GM12878 (cell line): ENCODE measurements at regions of chr11 and their contacts with region 1.

Region 1: GRCh38 chr11:33362051-33362910 is 105.1 kb downstream of the HIPK3 start:
- DNase-seq: no peak
- ATAC-seq: peak; percentile 84
- H3K4me3 ChIP-seq: no peak overlapping the region
- H3K27ac ChIP-seq: no peak overlapping the region
- H3K4me1 ChIP-seq: no peaks in the 10 kb centered on the region
- H3K27me3 ChIP-seq: no peaks in the 10 kb centered on the region
- CTCF ChIP-seq: peak; percentile 39 to 63 (median 47); a peak in 4 of 6 replicates
- EP300 ChIP-seq: no peak
- POLR2A ChIP-seq: no peak
- RAD21 ChIP-seq: peak; percentile 76

Region 2: DNA sequence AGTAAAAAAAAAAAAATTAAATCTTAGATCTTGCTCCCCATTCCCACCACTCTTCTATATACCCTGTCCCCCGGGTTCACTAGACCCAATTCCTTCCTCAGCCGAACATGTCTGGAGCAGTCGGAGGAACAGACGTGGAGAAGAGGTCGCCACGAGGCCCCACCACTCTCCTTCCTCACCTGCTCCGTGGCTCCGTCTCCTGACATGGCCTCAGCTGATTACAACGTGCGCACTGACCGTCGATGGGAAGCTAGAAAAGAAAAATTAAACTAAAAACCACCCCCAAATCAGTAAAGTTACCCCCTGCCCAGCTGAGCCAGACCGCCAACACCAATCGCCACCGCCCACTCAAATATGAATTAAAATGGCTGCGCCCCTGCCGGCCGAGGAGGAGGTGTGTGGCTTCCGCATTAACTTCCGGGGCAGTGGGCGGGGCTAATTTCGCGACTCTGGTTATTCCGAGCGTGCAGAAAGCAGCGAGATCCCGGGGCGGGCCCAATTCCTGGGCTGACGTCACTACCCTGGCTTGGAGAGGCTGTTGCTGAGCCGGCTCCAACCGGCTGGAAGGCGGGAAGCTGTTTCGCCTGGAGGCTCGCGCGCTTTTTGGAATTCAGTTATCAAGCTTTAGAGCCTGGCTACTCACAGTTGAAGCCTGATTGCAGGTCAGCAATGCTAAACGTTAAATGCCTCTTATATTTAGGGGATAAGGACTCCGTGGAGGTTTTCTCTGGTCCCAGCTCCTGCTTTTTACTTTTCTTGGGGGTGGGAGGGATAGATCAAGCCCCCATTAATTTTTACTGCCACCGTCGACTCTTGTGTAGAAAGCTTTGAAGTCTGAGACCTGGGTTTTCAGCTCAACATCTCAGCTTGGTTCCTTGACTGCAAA is 200.9 kb before region 1 on chr11 and contains the start of gene CSTF3:
- CTCF ChIA-PET with region 1: interaction called, 12 read pairs
- POLR2A ChIA-PET with region 1: no interaction called
- RAD21 ChIA-PET with region 1: interaction called, 4 read pairs
- SMC1A ChIA-PET with region 1: interaction called, 5 read pairs
- in situ Hi-C with region 1: no loop called
- intact Hi-C with region 1: no loop called
- DNase-seq: peak; percentile 74
- ATAC-seq: peak; percentile 92
- H3K4me3 ChIP-seq: peak within 1 kb of the TSS; percentile 91
- H3K27ac ChIP-seq: peak within 1 kb of the TSS; percentile 97
- H3K4me1 ChIP-seq: no peaks in the 10 kb centered on the region
- H3K27me3 ChIP-seq: no peaks in the 10 kb centered on the region
- CTCF ChIP-seq: peak; percentile 19 to 23 (median 19); a peak in 3 of 6 replicates
- EP300 ChIP-seq: no peak; a peak in 1 of 4 replicates
- POLR2A ChIP-seq: peak; percentile 80
- RAD21 ChIP-seq: no peak
- polyA plus RNA-seq, gene CSTF3: 42.0 to 50.1 TPM

Region 3: GRCh38 chr11:33475993-33476392 is 113.7 kb after region 1 on chr11:
- CTCF ChIA-PET with region 1: no interaction called
- POLR2A ChIA-PET with region 1: no interaction called
- RAD21 ChIA-PET with region 1: no interaction called
- SMC1A ChIA-PET with region 1: interaction called, 5 read pairs
- in situ Hi-C with region 1: no loop called
- intact Hi-C with region 1: loop called (anchors 10 kb)
- DNase-seq: no peak
- ATAC-seq: no peak
- H3K4me3 ChIP-seq: no peak overlapping the region
- H3K27ac ChIP-seq: no peak overlapping the region
- H3K4me1 ChIP-seq: peaks cover 3% of the 10 kb centered on the region; the same call in 1 of the 2 replicates
- H3K27me3 ChIP-seq: no peaks in the 10 kb centered on the region; a peak in 1 of 4 replicates
- CTCF ChIP-seq: no peak
- EP300 ChIP-seq: no peak
- POLR2A ChIP-seq: no peak
- RAD21 ChIP-seq: no peak

Region 4: DNA sequence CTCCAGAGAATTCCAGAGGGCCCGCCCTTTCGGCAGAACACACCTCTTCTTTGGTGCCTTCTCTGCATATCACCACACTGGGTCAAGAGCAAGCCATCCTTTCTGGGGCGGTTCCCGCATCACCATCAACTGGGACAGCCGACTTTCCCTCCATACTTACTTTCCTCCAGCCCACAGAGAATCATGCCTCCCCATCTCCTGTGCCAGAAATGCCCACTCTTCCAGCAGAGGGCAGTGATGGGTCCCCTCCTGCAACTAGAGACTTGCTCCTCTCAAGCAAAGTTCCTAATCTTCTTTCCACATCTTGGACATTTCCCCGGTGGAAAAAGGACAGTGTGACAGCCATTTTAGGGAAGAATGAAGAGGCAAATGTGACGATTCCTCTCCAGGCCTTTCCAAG is 180.6 kb after region 1 on chr11:
- CTCF ChIA-PET with region 1: interaction called, 3 read pairs
- POLR2A ChIA-PET with region 1: no interaction called
- RAD21 ChIA-PET with region 1: interaction called, 8 read pairs
- SMC1A ChIA-PET with region 1: interaction called, 3 read pairs
- in situ Hi-C with region 1: no loop called
- intact Hi-C with region 1: loop called (anchors 2 kb)
- DNase-seq: no peak
- ATAC-seq: peak; percentile 84
- H3K4me3 ChIP-seq: no peak overlapping the region
- H3K27ac ChIP-seq: no peak overlapping the region
- H3K4me1 ChIP-seq: peaks cover 24% of the 10 kb centered on the region
- H3K27me3 ChIP-seq: no peaks in the 10 kb centered on the region; a peak in 1 of 4 replicates
- CTCF ChIP-seq: peak; percentile 63 to 72 (median 67)
- EP300 ChIP-seq: no peak
- POLR2A ChIP-seq: no peak
- RAD21 ChIP-seq: peak; percentile 74

Region 5: DNA sequence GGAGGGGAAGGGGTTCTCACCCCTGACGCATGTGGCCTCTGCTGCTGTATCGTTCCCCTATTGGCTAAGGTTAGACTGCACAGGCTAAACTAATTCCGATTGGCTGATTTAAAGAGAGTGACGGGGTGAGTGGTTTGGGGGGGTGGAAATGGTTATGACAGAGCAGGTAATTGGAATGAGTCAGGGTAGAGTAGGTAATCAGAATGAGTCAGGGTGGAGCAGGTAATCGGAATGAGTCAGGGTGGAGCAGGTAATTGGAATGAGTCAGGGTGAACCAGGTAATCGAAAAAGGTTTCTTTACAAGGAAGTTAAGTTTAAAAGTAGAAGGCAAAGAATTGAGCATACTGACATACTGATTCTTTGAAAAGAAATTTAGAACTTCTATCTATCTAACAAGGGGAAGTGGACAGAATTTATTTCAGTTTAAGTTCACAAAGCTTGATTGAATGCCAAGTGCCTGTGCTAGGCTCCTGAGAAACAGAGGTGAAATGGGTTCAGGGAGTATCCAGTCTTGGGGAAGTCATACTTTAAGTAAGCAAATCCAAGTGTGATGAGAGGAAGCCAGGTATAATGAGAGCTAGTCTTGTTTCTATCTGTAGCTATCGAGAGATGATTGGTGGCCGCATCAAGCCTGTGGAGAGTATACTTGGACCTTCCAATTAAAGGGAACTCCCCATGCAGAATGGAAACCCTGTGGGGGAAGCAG is 280.3 kb after region 1 on chr11:
- CTCF ChIA-PET with region 1: no interaction called
- POLR2A ChIA-PET with region 1: no interaction called
- RAD21 ChIA-PET with region 1: no interaction called
- SMC1A ChIA-PET with region 1: no interaction called
- in situ Hi-C with region 1: no loop called
- intact Hi-C with region 1: no loop called
- DNase-seq: no peak
- ATAC-seq: no peak
- H3K4me3 ChIP-seq: no peak overlapping the region
- H3K27ac ChIP-seq: no peak overlapping the region
- H3K4me1 ChIP-seq: no peaks in the 10 kb centered on the region
- H3K27me3 ChIP-seq: no peaks in the 10 kb centered on the region
- CTCF ChIP-seq: no peak
- EP300 ChIP-seq: no peak
- POLR2A ChIP-seq: no peak
- RAD21 ChIP-seq: no peak

Region 6: DNA sequence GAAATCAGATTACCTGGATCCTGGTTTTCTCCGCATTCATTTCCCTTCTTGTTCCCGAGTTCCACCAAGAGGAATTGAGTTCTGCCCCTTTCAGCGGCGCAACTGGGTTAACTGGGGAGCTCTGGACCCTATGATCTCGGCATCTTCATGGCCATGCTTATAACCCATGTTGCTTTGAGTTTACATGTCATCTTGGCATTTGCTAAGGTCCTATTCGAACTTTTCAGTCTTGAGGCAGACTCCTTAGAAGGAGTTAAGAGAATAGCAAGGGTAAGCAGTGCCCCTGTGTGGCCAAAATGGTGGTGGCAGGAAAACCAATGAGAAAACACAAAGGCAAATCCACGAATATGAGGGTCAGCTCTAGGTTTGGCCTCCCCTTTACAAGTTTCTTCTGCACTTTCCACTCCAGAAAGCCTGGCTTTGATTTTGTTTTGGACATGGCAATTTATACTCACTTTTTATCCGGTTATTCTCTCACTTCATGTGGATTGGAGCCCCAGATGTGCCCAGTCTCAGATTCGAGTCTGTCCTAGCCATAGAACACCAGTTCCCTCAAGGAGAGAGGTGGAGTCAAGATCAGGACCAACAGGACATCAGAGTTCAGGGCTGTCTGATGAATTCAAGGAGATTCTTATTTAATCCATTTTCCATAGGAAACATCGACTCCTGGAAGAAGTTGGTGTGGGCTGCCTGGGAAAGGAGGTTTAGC is 467.3 kb after region 1 on chr11:
- CTCF ChIA-PET with region 1: interaction called, 5 read pairs
- POLR2A ChIA-PET with region 1: no interaction called
- RAD21 ChIA-PET with region 1: interaction called, 4 read pairs
- SMC1A ChIA-PET with region 1: interaction called, 4 read pairs
- in situ Hi-C with region 1: loop called (anchors 10 kb)
- intact Hi-C with region 1: loop called (anchors 2 kb)
- DNase-seq: peak; percentile 28
- ATAC-seq: peak; percentile 96
- H3K4me3 ChIP-seq: no peak overlapping the region; the same call in 1 of the 2 replicates
- H3K27ac ChIP-seq: no peak overlapping the region
- H3K4me1 ChIP-seq: peaks cover 4% of the 10 kb centered on the region; the same call in 1 of the 2 replicates
- H3K27me3 ChIP-seq: peaks cover 10 to 12% of the 10 kb centered on the region in 2 experiments; a peak in 3 of 4 replicates
- CTCF ChIP-seq: peak; percentile 78 to 89 (median 87)
- EP300 ChIP-seq: no peak
- POLR2A ChIP-seq: no peak
- RAD21 ChIP-seq: peak; percentile 95